ENCODE measurements at regions of chr14 and their contacts with region 1.

Region 1: DNA sequence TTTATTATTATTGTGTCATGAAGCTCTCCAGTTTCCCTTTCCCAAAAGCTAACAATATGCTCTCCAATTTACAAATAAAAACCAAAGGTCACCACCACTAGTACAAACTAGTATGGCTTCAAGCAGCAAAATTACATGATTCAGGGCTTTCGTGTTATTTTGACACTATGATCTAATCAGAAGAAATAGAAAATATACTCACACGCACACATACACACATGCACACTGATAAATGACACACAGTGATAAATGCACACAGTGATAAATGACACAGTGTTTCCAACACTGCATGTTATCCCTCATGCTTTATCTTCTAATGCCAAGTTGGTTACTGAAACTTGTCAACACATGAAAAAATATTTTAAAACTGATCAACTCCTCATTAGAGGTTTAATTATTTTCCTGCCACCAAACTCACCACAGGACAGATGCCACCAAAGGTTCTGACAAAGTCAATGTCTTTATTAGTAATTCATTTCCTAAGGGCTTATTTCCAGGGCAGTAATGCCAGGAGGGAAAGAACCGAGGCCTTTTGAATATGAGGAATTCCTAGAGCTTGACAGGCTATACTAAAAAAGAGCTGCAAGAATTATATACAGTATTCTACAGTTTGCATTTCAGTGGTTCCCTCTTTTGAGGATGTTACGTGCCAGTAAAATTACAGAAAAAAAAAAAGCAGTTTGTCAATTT is 82.4 kb downstream of the PPP2R5E start:
- DNase-seq: no peak
- H3K4me3 ChIP-seq: no peak overlapping the region
- H3K27ac ChIP-seq: no peak overlapping the region
- H3K4me1 ChIP-seq: no peaks in the 10 kb centered on the region
- H3K27me3 ChIP-seq: no peaks in the 10 kb centered on the region
- CTCF ChIP-seq: no peak
- POLR2A ChIP-seq: no peak

Region 2: DNA sequence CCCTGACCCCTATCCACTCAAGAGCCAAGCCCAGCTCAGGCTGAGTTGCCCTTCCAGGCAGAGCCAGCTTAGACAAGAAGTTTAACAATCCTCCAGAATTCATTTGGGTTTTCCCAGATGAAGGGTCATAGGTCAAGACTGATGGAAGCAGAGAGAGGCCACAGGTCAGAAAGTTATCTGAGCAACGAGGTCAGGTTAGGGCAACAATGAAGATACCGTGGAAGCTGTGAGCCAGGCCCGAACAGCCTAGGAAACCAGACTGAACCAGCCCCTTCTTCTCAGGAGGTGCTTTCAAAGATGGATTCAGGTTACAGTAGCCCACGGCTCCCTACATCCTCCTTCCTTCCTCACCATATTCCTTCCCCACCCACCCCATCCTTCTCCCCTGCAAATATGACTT is 203.5 kb before region 1 on chr14:
- CTCF ChIA-PET with region 1: no interaction called
- POLR2A ChIA-PET with region 1: no interaction called
- dilution Hi-C with region 1: no loop called
- intact Hi-C with region 1: no loop called
- DNase-seq: no peak
- H3K4me3 ChIP-seq: no peak overlapping the region
- H3K27ac ChIP-seq: no peak overlapping the region
- H3K4me1 ChIP-seq: no peaks in the 10 kb centered on the region
- H3K27me3 ChIP-seq: no peaks in the 10 kb centered on the region
- CTCF ChIP-seq: no peak
- POLR2A ChIP-seq: no peak

Region 3: GRCh38 chr14:63367742-63368364 is 93.0 kb before region 1 on chr14:
- CTCF ChIA-PET with region 1: no interaction called
- POLR2A ChIA-PET with region 1: no interaction called
- dilution Hi-C with region 1: no loop called
- intact Hi-C with region 1: no loop called
- DNase-seq: no peak
- H3K4me3 ChIP-seq: no peak overlapping the region
- H3K27ac ChIP-seq: no peak overlapping the region
- H3K4me1 ChIP-seq: no peaks in the 10 kb centered on the region
- H3K27me3 ChIP-seq: no peaks in the 10 kb centered on the region
- CTCF ChIP-seq: no peak
- POLR2A ChIP-seq: no peak

Region 4: GRCh38 chr14:63470962-63471793 is 10.4 kb after region 1 on chr14:
- CTCF ChIA-PET with region 1: interaction called, 10 read pairs
- POLR2A ChIA-PET with region 1: no interaction called
- dilution Hi-C with region 1: no loop called
- intact Hi-C with region 1: no loop called
- DNase-seq: peak; percentile 76
- H3K4me3 ChIP-seq: no peak overlapping the region
- H3K27ac ChIP-seq: no peak overlapping the region
- H3K4me1 ChIP-seq: peaks cover 16% of the 10 kb centered on the region
- H3K27me3 ChIP-seq: no peaks in the 10 kb centered on the region
- CTCF ChIP-seq: no peak
- POLR2A ChIP-seq: no peak

Region 5: GRCh38 chr14:63551332-63551731 is 90.5 kb after region 1 on chr14:
- CTCF ChIA-PET with region 1: no interaction called
- POLR2A ChIA-PET with region 1: no interaction called
- dilution Hi-C with region 1: no loop called
- intact Hi-C with region 1: no loop called
- DNase-seq: no peak
- H3K4me3 ChIP-seq: no peak overlapping the region
- H3K27ac ChIP-seq: no peak overlapping the region
- H3K4me1 ChIP-seq: no peaks in the 10 kb centered on the region
- H3K27me3 ChIP-seq: no peaks in the 10 kb centered on the region
- CTCF ChIP-seq: no peak
- POLR2A ChIP-seq: no peak

Region 6: GRCh38 chr14:63727774-63728728 is 267.2 kb after region 1 on chr14 and contains the start of gene SGPP1:
- CTCF ChIA-PET with region 1: no interaction called
- POLR2A ChIA-PET with region 1: no interaction called
- dilution Hi-C with region 1: no loop called
- intact Hi-C with region 1: no loop called
- DNase-seq: peak; percentile 71
- H3K4me3 ChIP-seq: peak within 1 kb of the TSS; percentile 28 to 80 (median 63)
- H3K27ac ChIP-seq: peak within 1 kb of the TSS; percentile 46
- H3K4me1 ChIP-seq: peaks cover 17% of the 10 kb centered on the region
- H3K27me3 ChIP-seq: no peaks in the 10 kb centered on the region
- CTCF ChIP-seq: peak; percentile 21 to 52
- POLR2A ChIP-seq: peak; percentile 79
- total RNA-seq, gene SGPP1: 7.6 and 7.9 TPM in 2 replicates

Measured in endothelial cell of umbilical vein (primary cell).